ENCODE measurements at regions of chr22 and their contacts with region 1.

Region 1: DNA sequence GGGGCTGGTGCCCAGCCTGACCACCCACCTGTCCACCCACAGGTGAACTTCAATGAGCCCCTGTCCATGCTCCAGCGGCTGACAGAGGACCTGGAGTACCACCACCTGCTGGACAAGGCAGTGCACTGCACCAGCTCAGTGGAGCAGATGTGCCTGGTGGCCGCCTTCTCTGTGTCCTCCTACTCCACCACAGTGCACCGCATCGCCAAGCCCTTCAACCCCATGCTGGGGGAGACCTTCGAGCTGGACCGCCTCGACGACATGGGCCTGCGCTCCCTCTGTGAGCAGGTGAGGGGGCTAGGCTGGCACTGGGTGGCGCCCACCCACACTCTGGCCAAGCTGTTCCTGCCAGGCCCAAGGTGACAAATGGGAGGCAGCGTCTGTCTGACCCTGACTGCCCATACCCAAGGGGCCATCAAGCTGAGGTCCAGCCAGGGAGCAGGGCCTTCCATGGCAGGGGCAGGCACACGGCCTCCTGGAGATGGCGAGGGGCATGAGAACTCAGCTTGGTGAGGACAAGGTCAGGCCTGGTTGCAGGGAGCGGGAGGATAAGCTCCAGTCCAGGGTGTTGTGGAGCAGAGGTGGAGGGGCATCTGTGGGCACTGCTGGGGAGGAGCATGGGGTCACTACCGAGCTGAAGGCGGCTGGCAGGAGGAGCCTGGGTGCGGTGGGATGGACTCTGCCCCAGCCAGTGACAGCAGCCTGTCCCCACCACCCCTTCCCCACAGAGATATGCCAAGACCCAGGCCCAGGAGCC is 77.7 kb downstream of the MORC2 start:
- DNase-seq: peak; percentile 19
- H3K4me3 ChIP-seq: no peak overlapping the region
- H3K27ac ChIP-seq: no peak overlapping the region
- H3K4me1 ChIP-seq: no peaks in the 10 kb centered on the region
- H3K27me3 ChIP-seq: no peaks in the 10 kb centered on the region
- CTCF ChIP-seq: peak; percentile 72 to 90
- POLR2A ChIP-seq: no peak

Region 2: GRCh38 chr22:30777587-30777986 is 113.3 kb before region 1 on chr22:
- CTCF ChIA-PET with region 1: interaction called, 15 read pairs
- POLR2A ChIA-PET with region 1: no interaction called
- dilution Hi-C with region 1: no loop called
- intact Hi-C with region 1: no loop called
- DNase-seq: no peak
- H3K4me3 ChIP-seq: no peak overlapping the region
- H3K27ac ChIP-seq: no peak overlapping the region
- H3K4me1 ChIP-seq: peaks cover 3% of the 10 kb centered on the region
- H3K27me3 ChIP-seq: no peaks in the 10 kb centered on the region
- CTCF ChIP-seq: no peak
- POLR2A ChIP-seq: no peak

Region 3: DNA sequence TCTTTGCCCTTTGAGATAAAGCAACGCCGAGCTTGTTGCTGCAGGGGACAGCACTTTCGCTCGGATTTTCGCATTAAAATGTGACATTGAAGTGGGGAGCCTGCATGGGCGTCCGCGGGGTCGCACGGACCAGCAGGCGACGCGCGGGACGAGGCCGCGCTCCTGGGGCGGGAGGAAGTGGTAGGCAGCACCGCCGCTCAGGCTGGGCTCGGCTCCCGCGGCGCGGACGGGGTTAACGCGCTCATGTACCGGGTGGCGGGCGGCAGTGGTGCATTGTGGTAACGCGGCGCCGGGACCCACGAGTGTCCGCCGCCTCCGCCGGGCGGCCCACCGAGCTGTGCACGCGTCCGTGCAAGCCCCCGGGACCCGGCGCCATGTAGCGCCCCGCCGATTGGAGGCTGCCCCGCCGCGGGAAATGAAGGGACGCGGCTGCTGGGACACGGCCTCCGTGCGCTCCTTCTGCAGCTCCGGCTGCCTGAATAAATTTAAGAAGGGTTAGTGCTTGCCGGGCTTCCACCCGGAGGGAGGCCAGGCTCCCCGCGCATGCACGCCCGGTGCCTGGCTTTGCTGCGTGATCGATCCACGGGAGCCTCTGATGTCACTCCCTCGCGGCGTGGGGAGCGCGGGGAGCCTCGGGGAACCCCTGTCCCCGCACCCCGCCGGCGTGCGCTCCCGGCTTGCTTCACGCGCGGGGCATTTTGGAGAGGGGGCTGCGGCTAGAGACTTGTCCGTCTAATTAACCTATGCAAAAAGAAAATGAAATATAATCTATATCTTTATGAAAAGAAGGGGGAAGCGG is 68.4 kb before region 1 on chr22:
- CTCF ChIA-PET with region 1: interaction called, 15 read pairs
- POLR2A ChIA-PET with region 1: no interaction called
- dilution Hi-C with region 1: no loop called
- intact Hi-C with region 1: no loop called
- DNase-seq: no peak
- H3K4me3 ChIP-seq: peak overlapping the region in 2 of 3 experiments; percentile 26 to 27
- H3K27ac ChIP-seq: no peak overlapping the region
- H3K4me1 ChIP-seq: no peaks in the 10 kb centered on the region
- H3K27me3 ChIP-seq: peaks cover 34 to 38% of the 10 kb centered on the region in 2 experiments
- CTCF ChIP-seq: no peak
- POLR2A ChIP-seq: no peak

Region 4: GRCh38 chr22:30908051-30908461 is 17.2 kb after region 1 on chr22:
- CTCF ChIA-PET with region 1: interaction called, 10 read pairs
- POLR2A ChIA-PET with region 1: no interaction called
- dilution Hi-C with region 1: no loop called
- intact Hi-C with region 1: no loop called
- DNase-seq: no peak
- H3K4me3 ChIP-seq: no peak overlapping the region
- H3K27ac ChIP-seq: no peak overlapping the region
- H3K4me1 ChIP-seq: no peaks in the 10 kb centered on the region
- H3K27me3 ChIP-seq: no peaks in the 10 kb centered on the region
- CTCF ChIP-seq: no peak
- POLR2A ChIP-seq: no peak

Region 5: GRCh38 chr22:30927806-30928205 is 36.9 kb after region 1 on chr22:
- CTCF ChIA-PET with region 1: no interaction called
- POLR2A ChIA-PET with region 1: no interaction called
- dilution Hi-C with region 1: no loop called
- intact Hi-C with region 1: no loop called
- DNase-seq: no peak
- H3K4me3 ChIP-seq: no peak overlapping the region
- H3K27ac ChIP-seq: no peak overlapping the region
- H3K4me1 ChIP-seq: no peaks in the 10 kb centered on the region
- H3K27me3 ChIP-seq: no peaks in the 10 kb centered on the region
- CTCF ChIP-seq: no peak
- POLR2A ChIP-seq: no peak

Region 6: DNA sequence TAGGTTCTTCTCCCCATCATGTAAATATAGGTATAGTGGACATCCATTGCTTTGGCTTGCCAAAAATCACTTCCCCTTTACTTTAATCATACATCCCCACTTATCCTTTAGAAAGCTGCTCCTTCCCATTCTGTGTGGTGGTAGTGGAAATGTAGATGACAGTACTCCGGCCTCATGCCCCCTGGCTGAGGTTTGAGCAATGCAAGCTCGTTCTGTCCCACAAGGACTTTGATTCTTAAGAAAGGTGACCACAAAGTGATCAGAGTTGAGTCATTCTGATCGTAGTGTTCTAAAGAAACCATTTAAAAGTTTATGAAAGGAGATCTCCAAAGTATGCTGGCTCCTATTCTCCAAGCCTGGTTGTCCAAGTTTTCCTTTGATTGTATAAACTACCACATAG is 89.1 kb after region 1 on chr22:
- CTCF ChIA-PET with region 1: no interaction called
- POLR2A ChIA-PET with region 1: no interaction called
- dilution Hi-C with region 1: no loop called
- intact Hi-C with region 1: no loop called
- DNase-seq: no peak
- H3K4me3 ChIP-seq: no peak overlapping the region
- H3K27ac ChIP-seq: no peak overlapping the region
- H3K4me1 ChIP-seq: no peaks in the 10 kb centered on the region
- H3K27me3 ChIP-seq: no peaks in the 10 kb centered on the region
- CTCF ChIP-seq: no peak
- POLR2A ChIP-seq: no peak

Region 7: GRCh38 chr22:31223786-31224191 is 332.9 kb after region 1 on chr22:
- CTCF ChIA-PET with region 1: no interaction called
- POLR2A ChIA-PET with region 1: no interaction called
- dilution Hi-C with region 1: no loop called
- intact Hi-C with region 1: no loop called
- DNase-seq: no peak
- H3K4me3 ChIP-seq: no peak overlapping the region
- H3K27ac ChIP-seq: no peak overlapping the region
- H3K4me1 ChIP-seq: peaks cover 9% of the 10 kb centered on the region
- H3K27me3 ChIP-seq: no peaks in the 10 kb centered on the region
- CTCF ChIP-seq: no peak
- POLR2A ChIP-seq: no peak